A673 (cell line): ENCODE measurements at regions of chr1 and their contacts with region 1.

Region 1: DNA sequence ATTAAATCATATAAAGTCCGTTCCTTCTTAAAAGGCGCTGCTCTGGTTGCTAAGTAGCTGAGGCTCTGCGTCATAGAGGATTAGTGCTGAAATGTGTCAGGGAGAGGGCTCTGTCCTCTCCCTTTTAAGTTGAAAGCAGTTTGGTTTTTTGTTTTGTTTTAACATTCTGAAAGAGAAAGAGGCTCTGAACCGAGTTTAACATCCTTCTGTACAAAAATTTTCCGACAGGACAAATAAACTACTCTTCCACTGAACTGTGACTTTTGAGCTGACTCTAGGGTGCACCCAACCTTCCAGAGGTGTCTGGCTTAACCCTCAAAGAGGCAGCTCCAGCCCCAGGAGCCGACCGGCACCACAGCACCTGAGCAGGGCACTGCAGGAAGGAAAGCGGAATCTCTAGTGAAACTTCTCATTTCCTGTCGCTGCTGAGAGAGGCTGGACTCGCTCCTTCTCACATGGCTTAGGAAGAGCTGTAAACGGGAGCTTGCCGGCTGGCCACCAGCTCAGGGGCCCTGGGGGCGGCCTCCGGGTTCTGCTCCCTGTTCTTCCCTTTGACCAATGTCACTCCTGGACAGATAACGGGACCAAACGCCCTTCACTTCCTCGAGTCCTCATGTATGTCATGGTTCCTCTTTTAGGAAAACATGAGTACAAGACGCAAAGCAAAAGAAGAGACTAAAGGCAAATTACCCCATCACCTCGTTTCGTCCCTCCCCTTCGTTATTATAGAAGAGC is 1.2 kb downstream of the VAV3 start:
- DNase-seq: peak; percentile 14
- H3K4me3 ChIP-seq: peak overlapping the region; percentile 41
- H3K27ac ChIP-seq: no peak overlapping the region
- H3K4me1 ChIP-seq: peaks cover 16% of the 10 kb centered on the region
- H3K27me3 ChIP-seq: peaks cover 51% of the 10 kb centered on the region
- CTCF ChIP-seq: no peak

Region 2: GRCh38 chr1:107767156-107767582 is 196.6 kb before region 1 on chr1:
- CTCF ChIA-PET with region 1: no interaction called
- POLR2A ChIA-PET with region 1: no interaction called
- intact Hi-C with region 1: no loop called
- DNase-seq: no peak
- H3K4me3 ChIP-seq: no peak overlapping the region
- H3K27ac ChIP-seq: no peak overlapping the region
- H3K4me1 ChIP-seq: no peaks in the 10 kb centered on the region
- H3K27me3 ChIP-seq: no peaks in the 10 kb centered on the region
- CTCF ChIP-seq: no peak

Region 3: DNA sequence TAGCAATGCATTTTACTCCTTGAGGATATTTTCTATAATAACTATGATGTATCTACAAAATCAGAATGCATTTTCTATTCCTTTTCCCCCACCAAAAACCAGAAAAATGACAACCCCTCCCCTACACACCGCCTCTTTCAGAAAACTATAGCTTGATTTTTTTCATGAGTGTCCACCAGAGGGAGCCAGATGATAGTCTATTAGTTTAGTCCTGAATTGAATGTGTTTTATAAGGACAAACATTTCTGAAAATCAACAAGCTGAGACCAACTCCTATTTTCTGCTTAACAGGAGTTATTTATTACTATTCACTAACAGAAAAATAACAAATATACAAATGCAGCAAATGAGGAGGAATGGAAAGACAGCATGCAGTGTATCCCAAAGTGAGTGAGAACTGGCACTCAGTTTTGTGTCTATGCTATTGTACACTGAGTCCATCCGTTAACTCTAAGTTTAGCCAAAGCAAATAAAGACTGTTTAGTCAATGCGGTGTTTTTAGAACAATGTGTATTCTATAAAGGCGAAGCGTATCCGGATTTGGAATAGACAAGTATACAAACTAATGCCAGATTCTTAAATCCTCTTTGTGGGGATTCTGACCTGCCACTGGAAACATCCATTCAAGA is 181.4 kb before region 1 on chr1:
- CTCF ChIA-PET with region 1: interaction called, 3 read pairs
- POLR2A ChIA-PET with region 1: no interaction called
- intact Hi-C with region 1: loop called (anchors 10 kb)
- DNase-seq: peak; percentile 73
- H3K4me3 ChIP-seq: no peak overlapping the region
- H3K27ac ChIP-seq: no peak overlapping the region
- H3K4me1 ChIP-seq: no peaks in the 10 kb centered on the region
- H3K27me3 ChIP-seq: no peaks in the 10 kb centered on the region
- CTCF ChIP-seq: peak; percentile 80

Region 4: DNA sequence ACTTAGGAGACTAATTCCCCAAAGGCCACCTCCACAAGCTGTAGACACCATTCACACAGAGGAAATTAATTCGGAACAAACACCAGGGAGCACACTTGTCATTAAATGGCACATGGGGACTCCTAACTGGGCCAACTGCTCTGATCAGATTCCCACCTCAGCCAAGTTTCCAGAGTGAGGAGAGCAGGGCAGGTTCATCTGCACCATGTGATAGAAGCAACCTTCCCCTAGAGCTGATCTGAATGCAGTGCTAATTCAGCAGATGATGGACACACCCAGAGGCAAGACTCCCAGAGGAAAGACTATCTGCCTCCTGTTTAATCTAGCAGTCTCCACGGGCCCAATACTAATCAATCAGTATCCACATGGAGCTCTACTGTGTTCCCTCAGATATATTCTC is 145.8 kb before region 1 on chr1:
- CTCF ChIA-PET with region 1: no interaction called
- POLR2A ChIA-PET with region 1: no interaction called
- intact Hi-C with region 1: loop called (anchors 10 kb)
- DNase-seq: peak; percentile 40
- H3K4me3 ChIP-seq: no peak overlapping the region
- H3K27ac ChIP-seq: no peak overlapping the region
- H3K4me1 ChIP-seq: peaks cover 2% of the 10 kb centered on the region
- H3K27me3 ChIP-seq: peaks cover 73% of the 10 kb centered on the region
- CTCF ChIP-seq: no peak

Region 5: DNA sequence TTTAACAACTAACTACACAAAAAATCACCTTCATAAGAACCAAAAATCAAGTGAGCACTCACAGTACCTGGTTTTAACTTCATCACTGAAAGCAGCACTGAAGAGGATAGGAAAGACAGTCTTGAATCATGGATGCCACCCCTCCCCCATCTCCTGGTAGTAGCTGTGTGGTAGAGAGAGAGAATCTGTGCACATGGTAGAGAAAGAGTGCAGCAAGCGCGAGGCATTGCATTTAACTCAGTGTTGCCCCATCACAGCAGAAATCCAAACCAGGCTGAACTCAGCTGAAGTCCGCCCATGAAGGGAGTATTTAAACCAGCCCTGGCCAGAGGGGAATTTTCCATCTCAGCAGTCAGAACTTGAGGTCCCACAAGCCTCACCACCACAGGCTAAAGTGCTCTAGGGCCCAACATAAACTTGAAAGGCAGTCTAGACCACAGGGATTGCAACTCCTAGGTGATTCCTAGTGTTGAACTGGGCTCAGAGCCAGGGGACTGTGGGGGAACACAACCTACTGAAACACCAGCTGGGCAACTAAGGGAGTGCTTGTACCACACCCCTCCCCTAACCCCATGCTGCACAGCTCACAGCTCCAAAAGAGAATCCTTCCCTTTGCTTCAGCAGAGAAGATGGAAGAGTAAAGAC is 37.2 kb before region 1 on chr1:
- CTCF ChIA-PET with region 1: no interaction called
- POLR2A ChIA-PET with region 1: no interaction called
- intact Hi-C with region 1: no loop called
- DNase-seq: no peak
- H3K4me3 ChIP-seq: no peak overlapping the region
- H3K27ac ChIP-seq: no peak overlapping the region
- H3K4me1 ChIP-seq: no peaks in the 10 kb centered on the region
- H3K27me3 ChIP-seq: no peaks in the 10 kb centered on the region
- CTCF ChIP-seq: no peak

Region 6: GRCh38 chr1:107936498-107937481 is 27.0 kb before region 1 on chr1:
- CTCF ChIA-PET with region 1: no interaction called
- POLR2A ChIA-PET with region 1: no interaction called
- intact Hi-C with region 1: no loop called
- DNase-seq: peak; percentile 84
- H3K4me3 ChIP-seq: no peak overlapping the region
- H3K27ac ChIP-seq: peak overlapping the region; percentile 34
- H3K4me1 ChIP-seq: peaks cover 35% of the 10 kb centered on the region
- H3K27me3 ChIP-seq: no peaks in the 10 kb centered on the region
- CTCF ChIP-seq: no peak